PC-3 (cell line): ENCODE measurements at regions of chr3 and their contacts with region 1.

Region 1: DNA sequence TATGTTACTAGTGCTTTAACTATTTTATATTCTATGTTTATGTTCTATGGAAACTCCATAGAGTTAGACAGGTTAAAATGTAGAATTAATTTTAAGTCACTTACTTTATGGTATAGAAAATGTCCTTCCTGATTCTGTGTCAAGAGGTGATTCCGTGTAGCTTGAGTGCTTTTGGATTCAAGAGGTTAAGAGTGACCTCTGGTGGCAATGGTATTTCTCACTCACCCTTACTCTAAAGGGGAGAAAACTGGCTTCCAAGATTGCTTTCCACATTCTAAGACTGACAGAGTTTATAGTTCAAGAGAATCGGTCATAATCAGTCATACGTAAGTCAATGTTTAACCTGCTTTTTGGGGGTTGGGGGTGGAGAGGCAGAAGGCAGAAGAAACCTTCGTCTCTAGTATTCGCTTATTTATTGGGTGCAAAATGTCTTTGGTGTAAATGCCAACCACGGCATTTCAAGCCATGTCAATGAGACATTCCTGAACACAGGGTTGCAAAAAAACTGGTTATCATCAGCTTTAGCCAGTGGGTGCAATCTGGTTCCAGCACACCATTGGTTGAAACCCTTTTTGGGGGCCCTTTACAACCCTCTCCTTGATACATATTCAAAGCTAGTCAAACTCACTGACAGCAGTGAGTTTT is 92.0 kb upstream of the VGLL3 start:
- DNase-seq: peak; percentile 85
- ATAC-seq: peak; percentile 97
- H3K4me3 ChIP-seq: peak overlapping the region; percentile 47
- H3K27ac ChIP-seq: no peak overlapping the region
- H3K4me1 ChIP-seq: peaks cover 9% of the 10 kb centered on the region; the same call in 1 of the 2 replicates
- H3K27me3 ChIP-seq: no peaks in the 10 kb centered on the region
- CTCF ChIP-seq: peak; percentile 91

Region 2: DNA sequence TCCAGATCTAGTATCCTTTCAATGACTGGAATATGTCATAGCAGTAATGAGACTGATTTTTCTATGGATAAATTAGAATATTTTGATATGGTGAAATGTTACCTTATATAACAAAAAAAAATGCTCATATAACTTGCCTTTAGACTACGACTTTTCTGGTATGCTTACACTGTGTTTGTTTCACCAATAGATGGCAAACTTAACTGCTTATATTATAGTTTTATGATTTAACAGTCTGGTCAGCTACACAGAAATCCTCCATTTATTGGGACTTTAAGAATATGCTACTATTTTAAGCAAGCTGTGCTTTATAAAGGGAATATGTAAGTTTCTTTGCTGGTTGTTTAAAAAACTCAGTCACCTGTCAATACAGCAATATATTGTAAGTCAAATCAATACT is 297.5 kb before region 1 on chr3:
- CTCF ChIA-PET with region 1: no interaction called
- POLR2A ChIA-PET with region 1: no interaction called
- intact Hi-C with region 1: loop called (anchors 1 kb)
- DNase-seq: peak; percentile 54
- ATAC-seq: peak; percentile 82
- H3K4me3 ChIP-seq: no peak overlapping the region
- H3K27ac ChIP-seq: no peak overlapping the region
- H3K4me1 ChIP-seq: peaks cover 10% of the 10 kb centered on the region
- H3K27me3 ChIP-seq: no peaks in the 10 kb centered on the region
- CTCF ChIP-seq: peak; percentile 71

Region 3: DNA sequence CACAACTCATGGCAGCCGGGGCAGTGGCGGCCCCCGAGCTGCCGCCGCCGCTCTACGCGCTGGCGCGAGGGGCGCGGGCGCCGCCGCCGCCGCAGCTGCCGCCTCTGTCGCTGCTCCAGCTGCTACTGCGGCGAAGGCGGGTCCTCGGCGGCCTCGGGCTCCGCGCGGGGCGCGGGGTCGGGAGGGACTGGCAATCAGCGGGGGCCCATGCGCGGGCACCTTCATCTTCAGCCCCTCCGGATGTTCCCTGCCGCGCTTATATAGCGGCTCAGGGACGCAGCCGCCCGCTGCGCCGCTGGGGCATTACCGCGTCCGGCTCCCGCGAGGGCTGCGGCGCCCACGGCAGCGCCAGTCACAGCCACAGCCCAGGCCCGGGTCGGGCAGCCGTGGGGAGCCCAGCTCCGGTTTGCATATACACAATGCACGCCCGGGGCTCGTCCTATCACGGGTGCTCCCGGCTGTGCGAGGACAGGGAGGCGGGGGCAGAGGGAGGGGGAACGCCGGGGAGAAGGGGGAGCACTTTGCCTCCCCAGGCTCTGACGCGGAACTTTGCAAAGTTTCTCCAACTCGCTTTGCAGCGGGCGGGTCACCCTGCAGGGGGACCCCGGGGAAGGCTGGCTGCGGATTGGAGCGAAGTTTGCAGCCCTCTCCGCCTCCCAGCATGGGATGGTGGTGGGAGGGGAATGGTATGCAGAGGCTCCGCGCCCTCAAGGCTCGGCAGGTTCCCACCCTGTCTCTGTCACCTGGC is 92.0 kb before region 1 on chr3 and contains the start of gene VGLL3:
- CTCF ChIA-PET with region 1: no interaction called
- POLR2A ChIA-PET with region 1: no interaction called
- intact Hi-C with region 1: loop called (anchors 5 kb)
- DNase-seq: peak; percentile 55
- ATAC-seq: peak; percentile 70
- H3K4me3 ChIP-seq: peak within 1 kb of the TSS; percentile 85
- H3K27ac ChIP-seq: peak within 1 kb of the TSS; percentile 4; the same call in 1 of the 2 replicates
- H3K4me1 ChIP-seq: peaks cover 42% of the 10 kb centered on the region
- H3K27me3 ChIP-seq: no peaks in the 10 kb centered on the region
- CTCF ChIP-seq: 0 out of 2 replicates have a peak, but pooled peaks have one; percentile 10
- total RNA-seq, gene VGLL3: 1.3 and 1.8 TPM in 2 replicates

Region 4: DNA sequence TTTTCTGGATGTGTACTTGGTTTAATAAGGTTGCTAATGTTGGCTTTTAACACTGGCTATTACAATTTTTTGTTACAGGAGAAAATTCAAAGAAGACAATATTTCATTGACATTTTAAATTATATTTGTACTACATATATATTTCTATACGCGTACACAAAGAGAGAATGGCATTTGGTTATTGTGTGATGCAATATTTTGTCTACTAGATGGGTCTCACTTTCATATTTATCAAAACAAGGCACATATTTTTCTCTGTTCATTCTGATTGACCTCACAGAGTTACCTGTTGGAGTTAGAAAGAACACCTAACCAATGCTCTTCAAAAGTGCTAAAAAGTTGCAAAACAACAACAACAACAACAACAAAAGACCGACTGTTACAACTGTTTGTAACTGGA is 41.7 kb before region 1 on chr3:
- CTCF ChIA-PET with region 1: no interaction called
- POLR2A ChIA-PET with region 1: no interaction called
- intact Hi-C with region 1: loop called (anchors 1 kb)
- DNase-seq: peak; percentile 48
- ATAC-seq: peak; percentile 59
- H3K4me3 ChIP-seq: no peak overlapping the region
- H3K27ac ChIP-seq: no peak overlapping the region
- H3K4me1 ChIP-seq: peaks cover 13% of the 10 kb centered on the region
- H3K27me3 ChIP-seq: no peaks in the 10 kb centered on the region
- CTCF ChIP-seq: peak; percentile 50; the same call in 1 of the 2 replicates

Region 5: GRCh38 chr3:87196876-87197275 is 114.0 kb after region 1 on chr3:
- CTCF ChIA-PET with region 1: no interaction called
- POLR2A ChIA-PET with region 1: no interaction called
- intact Hi-C with region 1: no loop called
- DNase-seq: peak; percentile 94
- ATAC-seq: peak; percentile 85
- H3K4me3 ChIP-seq: no peak overlapping the region
- H3K27ac ChIP-seq: peak overlapping the region; percentile 73
- H3K4me1 ChIP-seq: peaks cover 8% of the 10 kb centered on the region
- H3K27me3 ChIP-seq: no peaks in the 10 kb centered on the region
- CTCF ChIP-seq: no peak